ENCODE measurements at regions of chr20 and their contacts with region 1.

Region 1: DNA sequence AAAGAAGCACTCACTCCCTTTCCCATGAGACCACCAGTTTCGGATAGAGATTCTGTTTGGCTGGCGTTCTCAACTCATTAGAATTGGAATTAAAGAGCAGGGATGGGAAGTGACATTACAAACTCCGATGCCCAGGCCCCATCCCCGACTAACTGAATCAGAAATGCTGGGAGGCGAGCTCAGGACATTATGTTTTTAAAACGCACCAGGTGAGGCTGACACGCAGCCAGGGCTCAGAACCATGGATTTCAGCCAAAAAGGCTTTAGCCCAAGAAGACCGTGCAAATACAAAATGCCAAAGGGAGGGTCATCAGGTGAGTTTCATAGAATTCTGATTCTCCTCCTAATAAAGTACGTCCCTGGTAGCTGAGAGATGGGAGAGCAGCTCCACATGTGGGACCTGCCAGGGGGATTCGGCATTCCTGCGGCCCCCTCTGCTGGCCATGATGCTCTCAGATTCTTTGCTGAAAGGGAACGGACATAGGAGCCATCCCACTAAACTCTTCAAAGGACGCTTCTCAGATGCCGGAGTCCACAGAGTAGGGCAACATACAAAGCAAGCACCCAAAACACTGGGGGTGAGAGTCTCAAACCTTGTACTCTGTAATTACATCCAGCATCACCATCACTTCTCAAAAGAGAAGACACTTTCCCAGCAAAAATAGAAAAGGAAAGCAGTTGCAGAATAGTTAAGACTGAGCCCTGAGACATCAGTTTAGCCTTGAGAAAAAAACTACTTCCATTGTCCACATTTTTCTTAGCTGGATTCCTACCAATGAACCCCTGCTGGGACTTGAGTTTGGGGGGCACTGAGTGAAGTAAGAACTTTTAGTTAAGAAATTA is 205.2 kb downstream of the BMP7 start:
- DNase-seq: peak; percentile 34
- H3K4me3 Mint-ChIP-seq: no peak overlapping the region
- H3K27ac Mint-ChIP-seq: peak overlapping the region; percentile 73
- H3K4me1 Mint-ChIP-seq: peaks cover 9% of the 10 kb centered on the region
- H3K27me3 Mint-ChIP-seq: peaks cover 14% of the 10 kb centered on the region
- CTCF ChIP-seq: no peak

Region 2: GRCh38 chr20:57040924-57041323 is 20.4 kb before region 1 on chr20:
- CTCF ChIA-PET with region 1: interaction called, 29 read pairs
- POLR2A ChIA-PET with region 1: interaction called, 48 read pairs
- intact Hi-C with region 1: no loop called
- DNase-seq: peak; percentile 74
- H3K4me3 Mint-ChIP-seq: no peak overlapping the region
- H3K27ac Mint-ChIP-seq: no peak overlapping the region
- H3K4me1 Mint-ChIP-seq: peaks cover 10% of the 10 kb centered on the region
- H3K27me3 Mint-ChIP-seq: peaks cover 15% of the 10 kb centered on the region
- CTCF ChIP-seq: no peak

Region 3: GRCh38 chr20:57048027-57048869 is 13.0 kb before region 1 on chr20:
- CTCF ChIA-PET with region 1: interaction called, 29 read pairs
- POLR2A ChIA-PET with region 1: interaction called, 48 read pairs
- intact Hi-C with region 1: no loop called
- DNase-seq: peak; percentile 85
- H3K4me3 Mint-ChIP-seq: no peak overlapping the region
- H3K27ac Mint-ChIP-seq: no peak overlapping the region
- H3K4me1 Mint-ChIP-seq: peaks cover 8% of the 10 kb centered on the region
- H3K27me3 Mint-ChIP-seq: no peaks in the 10 kb centered on the region
- CTCF ChIP-seq: peak; percentile 55

Region 4: DNA sequence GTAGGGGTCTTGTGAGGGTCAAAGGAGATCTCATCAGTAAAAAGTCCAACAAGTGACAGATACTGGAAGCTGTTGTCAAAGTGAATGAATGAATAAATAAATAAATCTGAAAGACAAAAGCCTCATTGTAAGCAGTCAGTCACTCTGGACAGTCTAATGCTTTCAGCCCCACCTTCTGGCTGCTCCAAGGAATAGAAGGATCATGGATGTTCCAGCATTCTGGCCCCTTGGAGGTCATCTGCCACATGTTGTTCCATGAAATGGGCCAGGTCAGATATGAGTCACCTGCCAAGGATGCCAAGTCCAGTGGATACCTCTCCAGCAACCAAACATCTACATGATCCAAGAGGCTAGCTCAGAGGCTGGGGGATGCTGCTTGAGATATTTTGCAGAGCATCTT is 19.5 kb after region 1 on chr20:
- CTCF ChIA-PET with region 1: interaction called, 11 read pairs
- POLR2A ChIA-PET with region 1: interaction called, 3 read pairs
- intact Hi-C with region 1: no loop called
- DNase-seq: peak; percentile 32
- H3K4me3 Mint-ChIP-seq: no peak overlapping the region
- H3K27ac Mint-ChIP-seq: no peak overlapping the region
- H3K4me1 Mint-ChIP-seq: peaks cover 15% of the 10 kb centered on the region
- H3K27me3 Mint-ChIP-seq: peaks cover 18% of the 10 kb centered on the region
- CTCF ChIP-seq: peak; percentile 27

Region 5: DNA sequence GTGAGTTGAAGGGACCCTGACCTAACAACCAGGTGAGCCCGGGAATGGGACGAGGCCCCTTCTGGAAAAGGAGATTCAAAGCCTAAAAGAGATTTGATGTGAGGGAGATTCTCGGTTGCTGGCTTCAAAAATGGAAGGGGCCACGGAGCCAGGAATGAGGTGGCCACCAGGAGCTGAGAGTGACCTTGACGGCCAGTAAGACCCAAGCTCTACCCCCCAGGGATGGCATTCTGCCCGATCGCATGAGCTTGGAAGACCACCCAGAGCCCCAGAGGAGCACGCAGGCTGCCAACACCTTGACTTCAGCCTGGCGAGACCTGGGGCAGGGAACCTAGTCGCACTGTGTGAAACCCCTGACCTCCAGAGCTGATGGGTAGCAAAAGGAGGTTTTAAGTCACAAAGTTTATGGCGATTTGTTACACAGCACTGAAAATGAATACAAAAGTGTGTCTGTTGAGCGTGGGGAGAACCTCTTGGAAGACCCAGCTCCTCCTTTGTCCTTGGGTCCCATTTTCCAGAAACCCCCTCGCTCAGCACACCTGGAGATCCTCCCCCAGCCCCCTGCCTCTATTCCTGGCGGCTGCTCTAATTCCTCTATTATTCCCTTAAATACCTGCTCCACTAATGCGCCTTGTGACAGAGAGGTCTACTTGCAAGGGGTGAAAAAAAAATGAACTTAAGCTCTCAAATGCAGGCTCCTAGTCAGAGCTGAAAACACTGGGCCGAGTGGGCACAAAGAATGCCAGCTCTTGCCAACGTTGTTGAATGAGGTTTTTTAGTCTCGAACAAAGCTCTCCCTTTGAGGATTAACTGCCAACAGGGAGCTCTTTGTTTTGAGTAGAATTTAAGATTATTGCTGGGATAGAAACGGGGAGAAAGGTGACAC is 41.5 kb after region 1 on chr20:
- CTCF ChIA-PET with region 1: no interaction called
- POLR2A ChIA-PET with region 1: no interaction called
- intact Hi-C with region 1: no loop called
- DNase-seq: no peak
- H3K4me3 Mint-ChIP-seq: no peak overlapping the region
- H3K27ac Mint-ChIP-seq: no peak overlapping the region
- H3K4me1 Mint-ChIP-seq: no peaks in the 10 kb centered on the region
- H3K27me3 Mint-ChIP-seq: peaks cover 67% of the 10 kb centered on the region
- CTCF ChIP-seq: no peak

Measured in MCF 10A (cell line).